ENCODE measurements at regions of chr11 and their contacts with region 1.

Region 1: DNA sequence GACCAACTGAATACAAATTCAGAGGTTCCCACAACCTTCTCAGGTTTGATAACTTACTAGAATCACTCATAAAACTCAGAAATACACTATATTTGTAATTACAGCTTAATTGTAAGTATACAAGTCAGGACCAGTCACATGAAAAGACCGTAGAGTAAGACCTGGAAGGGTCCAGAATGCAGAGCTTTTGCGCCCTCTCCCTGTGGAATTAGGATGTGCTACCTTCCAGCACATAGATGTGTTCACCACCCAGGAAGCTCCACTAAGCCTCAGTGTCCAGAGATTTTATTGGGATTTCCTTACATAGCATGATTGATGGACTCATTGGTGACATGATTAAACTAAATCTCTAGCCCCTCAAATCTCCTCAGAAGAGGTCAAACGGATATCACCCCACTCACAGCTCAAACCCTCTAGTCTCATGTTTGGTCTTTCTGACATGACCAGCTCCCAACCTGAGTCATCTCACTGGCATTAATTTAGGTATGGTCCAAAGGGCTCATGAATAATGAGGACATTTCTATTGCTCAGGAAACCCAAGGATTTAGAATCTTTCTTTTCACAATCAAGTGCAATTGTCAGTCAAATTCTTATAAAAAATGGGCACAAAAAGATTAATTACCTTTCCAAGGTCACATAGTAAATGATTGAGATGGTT is 77.2 kb upstream of the UBASH3B start:
- DNase-seq: no peak
- H3K4me3 ChIP-seq: no peak overlapping the region
- H3K27ac ChIP-seq: no peak overlapping the region
- H3K27me3 ChIP-seq: no peaks in the 10 kb centered on the region
- CTCF ChIP-seq: peak; percentile 9; the same call in 1 of the 2 replicates

Region 2: GRCh38 chr11:122322329-122322728 is 256.0 kb before region 1 on chr11:
- CTCF ChIA-PET with region 1: no interaction called
- POLR2A ChIA-PET with region 1: no interaction called
- DNase-seq: peak; percentile 52
- H3K4me3 ChIP-seq: no peak overlapping the region
- H3K27ac ChIP-seq: no peak overlapping the region
- H3K27me3 ChIP-seq: no peaks in the 10 kb centered on the region
- CTCF ChIP-seq: no peak

Region 3: DNA sequence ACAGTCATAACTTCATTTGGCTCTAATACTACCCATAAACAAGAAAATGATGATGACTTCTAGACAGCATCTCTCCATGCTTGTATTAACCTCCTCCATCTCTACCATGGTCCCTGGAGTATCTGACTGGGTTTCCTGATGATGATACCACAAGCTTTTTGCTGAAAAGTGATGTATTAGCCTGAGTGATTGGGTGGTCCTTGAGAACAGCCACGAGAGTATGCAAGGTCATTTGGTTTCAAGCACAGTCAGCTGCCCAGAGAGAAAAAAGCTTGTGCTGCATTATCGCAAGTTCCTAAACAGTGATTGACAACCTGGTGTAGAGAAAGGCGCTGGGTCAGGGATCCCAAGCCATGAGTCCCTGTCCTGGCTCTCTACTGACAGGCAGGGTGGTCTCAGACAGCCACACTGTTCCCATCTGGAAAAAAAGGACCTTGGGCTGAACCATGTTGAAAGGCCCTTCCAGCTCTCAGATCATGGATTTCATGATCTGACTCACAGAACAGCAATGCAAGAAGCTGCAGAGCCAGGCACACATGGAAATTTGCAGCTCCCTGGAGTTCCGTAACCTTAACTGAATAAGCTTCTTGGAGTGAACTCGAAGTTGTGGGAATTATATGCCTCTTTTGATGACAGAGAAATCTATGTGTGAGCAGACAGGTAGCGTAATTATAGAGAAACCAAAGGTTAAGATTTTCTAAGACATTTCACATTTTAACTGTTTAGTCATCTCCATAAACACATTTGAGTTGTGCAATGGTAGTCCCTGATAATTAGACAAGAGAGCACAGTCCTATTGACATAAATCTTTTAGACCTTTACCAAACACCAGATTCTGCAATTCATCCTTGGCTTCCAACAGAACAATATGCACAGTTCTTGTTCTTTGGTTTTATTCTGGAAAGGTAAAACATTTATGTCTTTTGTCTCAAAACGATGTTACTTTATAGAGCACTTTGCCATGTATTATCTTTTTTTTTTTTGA is 23.1 kb after region 1 on chr11:
- CTCF ChIA-PET with region 1: interaction called, 11 read pairs
- POLR2A ChIA-PET with region 1: no interaction called
- DNase-seq: no peak
- H3K4me3 ChIP-seq: no peak overlapping the region
- H3K27ac ChIP-seq: no peak overlapping the region
- H3K27me3 ChIP-seq: peaks cover 15% of the 10 kb centered on the region
- CTCF ChIP-seq: no peak